ENCODE measurements at regions of chr10 and their contacts with region 1.

Region 1: DNA sequence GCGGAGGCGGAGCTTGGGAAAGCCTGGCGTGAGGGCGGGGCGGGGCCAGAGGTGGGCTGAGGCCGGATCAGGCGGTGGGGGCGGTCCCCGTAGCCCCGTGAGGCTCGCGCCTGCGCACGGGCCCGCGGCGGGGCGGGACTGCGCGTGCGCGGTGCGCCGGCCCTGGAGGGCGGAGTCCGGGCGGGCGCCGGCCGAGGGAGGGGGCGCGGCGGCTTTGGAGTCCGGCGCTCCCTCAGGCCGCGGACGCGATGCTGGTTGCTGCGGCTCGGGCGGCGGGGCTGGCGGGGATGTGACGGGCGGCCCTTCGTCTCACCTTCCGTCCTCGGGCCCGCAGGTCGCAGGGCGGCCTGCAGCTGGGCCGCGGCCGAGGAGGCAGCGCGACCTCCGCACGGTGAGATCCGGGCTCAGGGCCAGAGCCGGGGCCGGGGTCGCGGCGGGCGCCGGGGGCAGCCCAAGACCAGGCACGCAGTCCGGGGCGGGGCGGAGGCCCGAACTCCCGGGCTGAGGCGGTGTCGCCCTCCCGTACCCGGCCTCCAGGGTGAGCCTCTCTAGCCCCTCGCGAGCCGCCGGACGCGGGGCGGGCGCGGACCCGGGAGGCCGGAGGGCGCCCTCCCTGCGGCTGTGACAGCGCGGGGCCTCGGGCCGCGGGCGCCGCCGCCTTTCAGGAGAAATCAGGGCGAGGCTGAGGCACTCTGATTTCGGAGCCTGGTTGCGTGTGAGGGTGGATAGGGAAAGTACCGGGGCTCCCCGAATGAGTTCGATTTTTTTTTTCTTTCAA is at the start of gene CCSER2:
- DNase-seq: peak; percentile 87 to 99 (median 95)

Region 2: GRCh38 chr10:84038035-84038434 is 290.6 kb before region 1 on chr10:
- intact Hi-C with region 1: no loop called
- DNase-seq: no peak

Region 3: DNA sequence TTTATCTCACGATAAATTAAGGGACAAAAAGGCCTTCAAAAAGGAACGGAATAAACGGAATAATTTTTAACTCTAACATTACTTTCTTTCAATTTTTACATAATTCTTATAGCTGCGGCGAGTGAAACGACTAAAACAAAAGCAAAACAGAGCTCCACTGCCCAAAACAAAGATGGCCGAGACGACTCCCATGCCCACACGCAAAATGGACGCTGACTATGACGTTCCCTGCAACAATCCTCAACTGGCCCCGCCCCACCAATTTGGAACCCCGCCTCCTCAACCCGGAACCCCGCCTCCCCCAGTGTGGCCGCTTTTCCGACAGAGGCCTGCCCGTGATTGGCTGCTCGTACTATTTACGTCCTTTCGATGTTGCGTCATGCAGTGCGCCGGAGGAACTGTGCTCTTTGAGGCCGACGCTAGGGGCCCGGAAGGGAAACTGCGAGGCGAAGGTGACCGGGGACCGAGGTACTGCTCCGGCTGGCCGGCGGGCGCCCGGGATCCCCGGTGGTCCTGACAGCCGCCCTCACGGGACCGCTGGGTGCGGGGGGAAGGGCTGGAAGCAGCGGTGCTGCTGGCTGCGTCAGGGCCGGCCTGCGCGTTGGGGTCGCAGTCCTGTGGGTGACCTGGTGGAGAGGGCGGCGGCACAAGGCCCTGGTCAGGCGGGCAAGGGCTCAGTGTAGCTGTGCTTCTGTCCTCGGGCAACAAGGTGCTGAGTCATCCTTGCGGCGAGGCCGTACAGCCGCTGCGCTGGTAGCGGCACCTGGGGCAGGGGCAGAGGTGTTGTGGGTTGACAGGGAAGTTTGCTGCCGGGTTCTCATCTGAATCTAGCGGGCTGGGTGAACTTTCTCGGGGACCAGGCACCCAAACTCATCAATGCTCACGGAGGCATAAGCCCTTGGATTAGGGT is 189.2 kb before region 1 on chr10 and contains the start of gene GHITM:
- intact Hi-C with region 1: loop called (anchors 5 kb)
- DNase-seq: peak; percentile 98 to 100 (median 99)